Mammary epithelial cell (primary cell): ENCODE measurements at regions of chr15 and their contacts with region 1.

Region 1: GRCh38 chr15:87267798-87268197 is 988.7 kb downstream of the NTRK3 start:
- DNase-seq: peak; percentile 94
- H3K4me3 ChIP-seq: no peak overlapping the region
- H3K27ac ChIP-seq: peak overlapping the region; percentile 94
- H3K4me1 ChIP-seq: peaks cover 30% of the 10 kb centered on the region
- H3K27me3 ChIP-seq: no peaks in the 10 kb centered on the region
- CTCF ChIP-seq: no peak

Region 2: GRCh38 chr15:86336051-86336788 is 931.6 kb before region 1 on chr15:
- CTCF ChIA-PET with region 1: no interaction called
- dilution Hi-C with region 1: no loop called
- in situ Hi-C with region 1: no loop called
- intact Hi-C with region 1: loop called (anchors 5 kb)
- DNase-seq: peak; percentile 100
- H3K4me3 ChIP-seq: peak overlapping the region in 2 of 3 experiments; percentile 3 to 32
- H3K27ac ChIP-seq: peak overlapping the region; percentile 95
- H3K4me1 ChIP-seq: peaks cover 23% of the 10 kb centered on the region
- H3K27me3 ChIP-seq: no peaks in the 10 kb centered on the region
- CTCF ChIP-seq: no peak

Region 3: DNA sequence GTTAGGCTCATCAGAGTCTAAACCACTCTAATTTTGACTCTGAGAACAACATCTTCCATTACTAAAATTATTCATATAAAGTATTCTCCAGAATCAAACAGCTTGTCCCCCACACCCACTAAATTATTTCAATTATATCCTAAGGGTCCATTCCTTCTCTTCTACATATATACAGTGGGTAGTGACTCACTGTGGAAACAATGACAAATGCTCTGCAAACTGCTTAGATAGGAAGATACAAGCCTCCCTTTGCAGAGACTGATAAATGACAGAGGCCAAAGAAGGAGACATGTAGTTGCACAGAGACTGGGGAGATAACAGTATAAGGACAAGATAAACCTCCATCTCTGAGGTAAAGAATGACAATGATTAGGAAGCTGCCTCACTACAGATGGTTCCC is 100.8 kb before region 1 on chr15:
- CTCF ChIA-PET with region 1: no interaction called
- dilution Hi-C with region 1: no loop called
- in situ Hi-C with region 1: no loop called
- intact Hi-C with region 1: loop called (anchors 5 kb)
- DNase-seq: peak; percentile 50
- H3K4me3 ChIP-seq: no peak overlapping the region
- H3K27ac ChIP-seq: peak overlapping the region; percentile 43
- H3K4me1 ChIP-seq: peaks cover 14% of the 10 kb centered on the region
- H3K27me3 ChIP-seq: no peaks in the 10 kb centered on the region
- CTCF ChIP-seq: no peak

Region 4: DNA sequence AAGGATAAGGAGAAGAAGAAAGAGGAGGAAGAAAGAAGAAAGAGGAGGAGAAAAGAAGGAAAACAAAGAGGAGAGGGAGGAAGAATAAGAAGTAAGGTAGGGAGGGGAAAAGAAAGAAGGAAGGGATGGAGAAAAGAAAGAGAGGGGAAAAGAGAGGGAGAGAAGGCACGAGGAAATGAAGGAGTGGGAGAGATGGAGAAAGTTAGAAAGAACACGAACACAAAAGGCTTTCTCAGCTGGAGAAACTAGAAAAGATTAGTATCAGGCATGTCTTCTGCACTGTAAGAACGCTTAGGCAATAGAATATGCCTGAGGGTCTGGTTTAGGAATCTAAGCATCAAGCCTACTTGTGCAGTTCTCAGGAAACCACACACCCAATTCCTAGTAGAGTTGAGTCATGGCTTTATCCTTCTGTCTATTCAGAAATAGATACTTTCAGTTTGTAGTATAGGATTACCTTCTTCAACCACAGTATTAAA is 19.3 kb after region 1 on chr15:
- CTCF ChIA-PET with region 1: no interaction called
- dilution Hi-C with region 1: no loop called
- in situ Hi-C with region 1: no loop called
- intact Hi-C with region 1: loop called (anchors 1 kb)
- DNase-seq: peak; percentile 95
- H3K4me3 ChIP-seq: no peak overlapping the region
- H3K27ac ChIP-seq: peak overlapping the region; percentile 85
- H3K4me1 ChIP-seq: peaks cover 8% of the 10 kb centered on the region
- H3K27me3 ChIP-seq: no peaks in the 10 kb centered on the region
- CTCF ChIP-seq: no peak

Region 5: GRCh38 chr15:87570206-87570605 is 302.4 kb after region 1 on chr15:
- CTCF ChIA-PET with region 1: no interaction called
- dilution Hi-C with region 1: no loop called
- in situ Hi-C with region 1: no loop called
- intact Hi-C with region 1: loop called (anchors 5 kb)
- DNase-seq: no peak
- H3K4me3 ChIP-seq: no peak overlapping the region
- H3K27ac ChIP-seq: no peak overlapping the region
- H3K4me1 ChIP-seq: peaks cover 35% of the 10 kb centered on the region
- H3K27me3 ChIP-seq: no peaks in the 10 kb centered on the region
- CTCF ChIP-seq: no peak